Activated CD4-positive, alpha-beta T cell treated with anti-CD3 and anti-CD28 coated beads, Interleukin-2, amount 10 ng/mL, durations not matched to agents 24 days and 14 days (primary cell): ENCODE measurements at regions of chr15 and their contacts with region 1.

Region 1: GRCh38 chr15:69443032-69443611 is 9.5 kb upstream of the RPLP1 start:
- DNase-seq: peak; percentile 65
- H3K4me3 Mint-ChIP-seq: peak overlapping the region; percentile 55
- H3K27ac Mint-ChIP-seq: peak overlapping the region; percentile 85
- H3K4me1 Mint-ChIP-seq: peaks cover 13% of the 10 kb centered on the region
- H3K27me3 Mint-ChIP-seq: no peaks in the 10 kb centered on the region

Region 2: GRCh38 chr15:69422336-69422895 is 20.7 kb before region 1 on chr15:
- intact Hi-C with region 1: loop called (anchors 2 kb)
- DNase-seq: no peak
- H3K4me3 Mint-ChIP-seq: no peak overlapping the region
- H3K27ac Mint-ChIP-seq: no peak overlapping the region
- H3K4me1 Mint-ChIP-seq: peaks cover 16% of the 10 kb centered on the region
- H3K27me3 Mint-ChIP-seq: no peaks in the 10 kb centered on the region